Calu3 (cell line): ENCODE measurements at regions of chr5 and their contacts with region 1.

Region 1: DNA sequence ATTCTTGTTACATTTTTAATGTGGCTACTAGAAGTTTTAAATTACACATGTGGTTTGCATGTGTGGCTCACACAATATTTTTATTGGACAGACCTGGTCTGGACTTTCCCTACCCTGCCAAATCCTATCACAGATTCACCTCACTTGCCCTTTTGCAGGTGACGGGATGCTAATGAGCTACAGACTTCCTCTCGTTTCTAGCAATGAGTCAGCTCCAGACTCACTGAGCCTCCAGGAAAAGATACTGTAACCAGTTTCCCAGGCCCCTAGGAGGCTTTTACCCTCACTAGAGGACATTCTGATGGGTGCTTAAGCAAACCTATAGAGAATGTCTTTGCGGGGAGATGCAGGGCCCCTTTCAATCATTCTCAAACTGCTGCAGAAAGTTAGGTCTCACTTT is 135.4 kb downstream of the WDR41 start:
- DNase-seq: peak; percentile 54
- H3K4me3 Mint-ChIP-seq: no peak overlapping the region
- H3K27ac Mint-ChIP-seq: no peak overlapping the region
- H3K4me1 Mint-ChIP-seq: peaks cover 11% of the 10 kb centered on the region
- H3K27me3 Mint-ChIP-seq: no peaks in the 10 kb centered on the region
- CTCF ChIP-seq: no peak

Region 2: DNA sequence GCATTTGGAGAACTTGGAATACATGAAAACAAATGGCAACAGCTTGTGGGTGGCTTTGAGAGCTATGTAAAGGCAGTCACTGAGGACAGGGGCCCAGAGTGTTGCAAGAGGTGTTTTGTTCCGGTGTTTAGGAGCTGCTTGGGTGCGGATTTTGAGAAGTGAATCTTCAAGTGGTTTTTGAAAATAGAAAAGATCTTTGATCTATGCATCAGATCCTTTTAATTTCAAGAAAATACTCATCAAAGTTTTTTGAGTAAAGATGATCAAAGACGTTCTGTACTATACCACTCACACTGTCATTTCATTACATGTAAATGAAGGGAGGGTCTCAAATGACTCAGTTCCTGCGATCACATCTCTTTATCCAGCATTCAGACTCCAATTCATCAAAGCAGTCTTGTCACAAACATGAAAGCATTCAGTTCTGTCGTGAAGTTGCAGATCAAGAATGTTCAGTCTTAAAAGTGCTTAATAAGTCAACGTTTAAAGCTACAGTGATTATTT is 22.9 kb after region 1 on chr5:
- CTCF ChIA-PET with region 1: interaction called, 11 read pairs
- intact Hi-C with region 1: no loop called
- DNase-seq: no peak
- H3K4me3 Mint-ChIP-seq: no peak overlapping the region
- H3K27ac Mint-ChIP-seq: no peak overlapping the region
- H3K4me1 Mint-ChIP-seq: peaks cover 31% of the 10 kb centered on the region
- H3K27me3 Mint-ChIP-seq: no peaks in the 10 kb centered on the region
- CTCF ChIP-seq: no peak